HepG2 (cell line): ENCODE measurements at regions of chr1 and their contacts with region 1.

Region 1: DNA sequence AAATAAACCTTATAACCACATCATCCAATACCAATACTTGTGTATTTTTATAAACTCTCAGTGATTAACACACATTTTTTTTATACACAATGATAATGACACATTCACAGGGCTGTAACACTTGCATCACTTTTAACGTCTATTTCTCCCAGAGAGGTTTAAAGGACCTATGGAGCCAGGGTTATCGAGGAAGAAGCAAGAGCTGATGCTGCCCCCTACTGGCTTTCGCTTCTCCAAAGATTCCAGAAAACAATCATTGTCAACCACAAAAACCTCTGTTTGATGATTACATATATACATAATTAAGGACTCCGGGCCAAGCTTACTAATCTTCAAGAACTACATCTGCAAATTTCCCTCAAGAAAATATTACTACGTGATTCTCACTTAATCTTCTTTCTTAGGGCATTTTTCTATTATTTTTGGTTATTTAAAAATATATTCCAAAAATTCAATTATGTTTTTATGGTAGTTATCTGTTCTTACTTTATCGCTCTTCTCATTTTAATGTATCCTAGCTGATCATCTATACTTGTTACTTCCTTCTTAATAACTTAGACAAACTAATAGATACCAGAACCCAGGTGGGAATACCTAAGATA is 214.5 kb downstream of the VAV3 start:
- DNase-seq: peak; percentile 65
- ATAC-seq: peak; percentile 81
- H3K4me3 ChIP-seq: no peak overlapping the region
- H3K27ac ChIP-seq: no peak overlapping the region
- H3K4me1 ChIP-seq: no peaks in the 10 kb centered on the region
- H3K27me3 ChIP-seq: no peaks in the 10 kb centered on the region
- CTCF ChIP-seq: peak; percentile 79
- EP300 ChIP-seq: no peak
- POLR2A ChIP-seq: no peak
- RAD21 ChIP-seq: peak; percentile 58; the same call in 1 of the 2 replicates

Region 2: DNA sequence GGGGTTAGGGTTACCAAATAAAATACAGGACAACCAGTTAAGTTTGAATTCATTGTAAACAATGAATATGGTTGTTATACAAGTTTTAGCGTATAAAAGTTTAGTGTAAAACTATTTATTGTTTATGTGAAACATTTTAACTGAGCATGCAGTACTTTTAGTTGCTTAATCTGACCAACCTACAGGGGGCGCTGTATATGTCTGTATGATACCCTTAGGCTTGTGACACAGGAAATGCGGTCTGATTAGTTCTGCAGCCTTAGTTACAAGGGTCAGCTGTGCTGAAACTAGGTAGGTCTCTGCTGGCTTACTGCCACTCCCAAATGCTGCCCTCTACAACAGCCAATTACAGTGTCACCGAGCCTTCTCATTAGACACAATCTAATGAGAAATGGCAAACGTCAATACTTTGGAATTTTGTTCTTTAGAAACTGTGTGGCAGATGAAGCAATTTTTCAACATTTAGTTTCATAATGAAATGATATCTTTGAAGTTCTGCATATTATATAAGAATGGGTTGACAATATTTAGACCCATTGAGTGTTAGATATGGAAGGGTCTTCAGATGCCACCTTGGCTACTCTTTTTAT is 553.4 kb before region 1 on chr1:
- CTCF ChIA-PET with region 1: no interaction called
- POLR2A ChIA-PET with region 1: no interaction called
- in situ Hi-C with region 1: no loop called
- intact Hi-C with region 1: loop called (anchors 1 kb)
- DNase-seq: peak; percentile 36
- ATAC-seq: peak; percentile 54
- H3K4me3 ChIP-seq: no peak overlapping the region
- H3K27ac ChIP-seq: no peak overlapping the region
- H3K4me1 ChIP-seq: no peaks in the 10 kb centered on the region
- H3K27me3 ChIP-seq: no peaks in the 10 kb centered on the region
- CTCF ChIP-seq: no peak
- EP300 ChIP-seq: no peak
- POLR2A ChIP-seq: no peak
- RAD21 ChIP-seq: no peak

Region 3: DNA sequence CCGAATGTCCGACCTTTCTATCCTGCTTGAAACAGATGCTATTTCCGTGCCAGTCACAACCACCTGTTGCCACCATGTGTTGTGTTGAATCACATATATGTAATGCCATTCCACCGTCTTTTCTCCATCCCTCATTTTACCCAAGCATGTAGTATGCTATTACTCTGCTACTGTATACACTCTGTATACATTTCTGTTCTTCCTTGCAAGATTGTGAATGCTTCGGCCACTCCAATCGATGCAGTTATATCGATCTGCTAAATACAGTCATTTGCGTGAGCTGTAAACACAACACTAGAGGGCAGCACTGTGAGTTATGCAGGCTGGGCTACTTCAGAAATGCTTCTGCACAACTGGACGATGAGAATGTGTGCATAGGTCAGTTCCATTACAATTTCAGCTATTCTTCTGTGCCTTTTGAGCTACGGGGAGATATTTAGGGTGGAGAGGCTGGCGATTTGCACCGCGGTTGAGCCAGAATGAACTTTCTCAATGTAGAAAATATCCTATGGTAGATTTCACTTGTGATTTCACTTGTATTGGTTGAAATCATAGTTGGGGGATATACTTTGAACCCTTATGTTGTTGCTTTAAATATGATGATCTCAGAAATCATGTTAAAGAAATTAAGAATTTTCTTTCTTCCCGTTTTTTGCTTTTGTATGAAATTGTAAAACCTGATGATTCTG is 319.8 kb before region 1 on chr1:
- CTCF ChIA-PET with region 1: interaction called, 45 read pairs
- POLR2A ChIA-PET with region 1: no interaction called
- in situ Hi-C with region 1: no loop called
- intact Hi-C with region 1: loop called (anchors 1 kb)
- DNase-seq: peak; percentile 67
- ATAC-seq: peak; percentile 98
- H3K4me3 ChIP-seq: no peak overlapping the region; a peak in 1 of 6 replicates
- H3K27ac ChIP-seq: no peak overlapping the region
- H3K4me1 ChIP-seq: peaks cover 7% of the 10 kb centered on the region; the same call in 1 of the 2 replicates
- H3K27me3 ChIP-seq: no peaks in the 10 kb centered on the region
- CTCF ChIP-seq: peak; percentile 92
- EP300 ChIP-seq: no peak
- POLR2A ChIP-seq: no peak
- RAD21 ChIP-seq: peak; percentile 71

Region 4: GRCh38 chr1:107599220-107599619 is 151.2 kb before region 1 on chr1:
- CTCF ChIA-PET with region 1: no interaction called
- POLR2A ChIA-PET with region 1: no interaction called
- in situ Hi-C with region 1: no loop called
- intact Hi-C with region 1: loop called (anchors 5 kb)
- DNase-seq: peak; percentile 18
- ATAC-seq: no peak
- H3K4me3 ChIP-seq: no peak overlapping the region
- H3K27ac ChIP-seq: peak overlapping the region; percentile 69
- H3K4me1 ChIP-seq: peaks cover 49% of the 10 kb centered on the region
- H3K27me3 ChIP-seq: no peaks in the 10 kb centered on the region
- CTCF ChIP-seq: no peak
- EP300 ChIP-seq: peak in 1 of 2 experiments; percentile 23; a peak in 1 of 4 replicates
- POLR2A ChIP-seq: no peak
- RAD21 ChIP-seq: no peak

Region 5: DNA sequence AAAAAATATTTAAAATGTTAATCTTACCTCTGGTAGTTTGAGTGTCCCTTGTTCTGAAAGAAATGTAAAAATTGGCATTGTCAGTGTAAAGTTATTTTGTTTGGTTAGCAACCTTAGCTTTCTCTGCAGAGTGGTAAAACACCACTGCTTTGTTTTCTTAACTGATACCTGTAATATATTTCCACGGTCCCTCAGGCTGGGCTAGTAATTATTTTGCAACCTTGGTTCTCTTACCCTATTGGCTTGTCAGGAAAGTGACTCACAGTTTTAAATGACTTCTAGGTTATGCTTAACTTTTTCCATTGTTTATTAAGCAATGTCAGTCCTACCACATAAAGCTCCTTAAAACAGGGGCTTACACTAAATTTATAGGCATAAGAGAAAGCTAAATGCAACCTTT is 62.1 kb before region 1 on chr1:
- CTCF ChIA-PET with region 1: no interaction called
- POLR2A ChIA-PET with region 1: no interaction called
- in situ Hi-C with region 1: loop called (anchors 10 kb)
- intact Hi-C with region 1: loop called (anchors 5 kb)
- DNase-seq: peak; percentile 71
- ATAC-seq: peak; percentile 88
- H3K4me3 ChIP-seq: peak overlapping the region; percentile 62 to 67 (median 63); a peak in 5 of 6 replicates
- H3K27ac ChIP-seq: peak overlapping the region; percentile 69
- H3K4me1 ChIP-seq: peaks cover 56% of the 10 kb centered on the region
- H3K27me3 ChIP-seq: no peaks in the 10 kb centered on the region
- CTCF ChIP-seq: no peak
- EP300 ChIP-seq: 0 out of 4 replicates have a peak, but pooled peaks of 1 of the 2 experiments have one; percentile 18
- POLR2A ChIP-seq: peak in 1 of 2 experiments; percentile 76; a peak in 3 of 4 replicates
- RAD21 ChIP-seq: no peak

Region 6: DNA sequence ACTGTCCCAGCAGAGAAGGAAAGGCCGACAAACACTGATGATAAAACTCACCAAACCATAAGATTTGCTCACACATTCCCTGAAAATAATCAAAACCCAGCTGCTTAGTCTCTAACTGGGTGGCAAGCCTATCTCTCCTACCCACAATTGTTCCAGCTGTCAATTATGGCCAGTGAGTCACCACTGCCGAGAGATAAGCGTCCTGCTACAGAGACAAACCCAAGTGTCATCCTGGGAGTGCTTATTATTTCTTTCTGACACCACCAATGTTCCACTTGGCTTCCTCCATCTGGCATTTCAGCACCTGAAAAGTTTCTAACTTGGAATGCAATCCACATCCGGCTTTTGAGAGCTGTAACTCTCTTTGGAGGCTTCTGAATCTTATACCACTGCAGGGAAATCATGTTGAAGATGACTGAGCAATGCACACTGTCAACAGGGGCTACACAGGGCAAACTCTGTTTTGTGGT is 266.0 kb after region 1 on chr1:
- CTCF ChIA-PET with region 1: no interaction called
- POLR2A ChIA-PET with region 1: no interaction called
- in situ Hi-C with region 1: no loop called
- intact Hi-C with region 1: no loop called
- DNase-seq: no peak
- ATAC-seq: no peak
- H3K4me3 ChIP-seq: no peak overlapping the region
- H3K27ac ChIP-seq: no peak overlapping the region
- H3K4me1 ChIP-seq: no peaks in the 10 kb centered on the region
- H3K27me3 ChIP-seq: no peaks in the 10 kb centered on the region
- CTCF ChIP-seq: no peak
- EP300 ChIP-seq: no peak
- POLR2A ChIP-seq: no peak
- RAD21 ChIP-seq: no peak